ENCODE measurements at regions of chr20 and their contacts with region 1.

Region 1: GRCh38 chr20:49534255-49534712 is 33.7 kb downstream of the PTGIS start:
- DNase-seq: peak; percentile 82
- H3K4me3 Mint-ChIP-seq: no peak overlapping the region
- H3K27ac Mint-ChIP-seq: no peak overlapping the region
- H3K4me1 Mint-ChIP-seq: no peaks in the 10 kb centered on the region
- H3K27me3 Mint-ChIP-seq: peaks cover 66% of the 10 kb centered on the region
- CTCF ChIP-seq: peak; percentile 90

Region 2: DNA sequence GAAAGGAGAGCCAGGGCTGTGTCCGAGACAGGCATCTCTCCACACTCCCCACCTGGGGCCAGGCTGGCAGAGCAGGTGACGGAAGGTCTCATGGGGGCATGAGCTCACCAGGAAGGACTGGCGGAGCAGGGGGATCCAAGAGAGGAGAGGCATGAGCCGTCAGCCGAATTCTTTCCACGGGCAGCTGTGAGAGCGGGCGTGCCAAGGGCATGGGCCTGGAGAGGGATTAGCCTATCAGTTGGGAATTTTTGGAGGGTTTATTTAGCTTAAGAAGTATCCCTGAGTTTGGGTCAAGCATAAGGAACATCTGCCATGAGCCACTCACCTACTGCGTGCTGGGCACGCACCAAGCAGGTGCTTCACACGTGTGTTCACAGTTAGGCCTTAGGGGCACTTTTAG is 196.2 kb before region 1 on chr20:
- CTCF ChIA-PET with region 1: no interaction called
- intact Hi-C with region 1: loop called (anchors 1 kb)
- DNase-seq: no peak
- H3K4me3 Mint-ChIP-seq: no peak overlapping the region
- H3K27ac Mint-ChIP-seq: no peak overlapping the region
- H3K4me1 Mint-ChIP-seq: no peaks in the 10 kb centered on the region
- H3K27me3 Mint-ChIP-seq: peaks cover 62% of the 10 kb centered on the region
- CTCF ChIP-seq: no peak

Region 3: DNA sequence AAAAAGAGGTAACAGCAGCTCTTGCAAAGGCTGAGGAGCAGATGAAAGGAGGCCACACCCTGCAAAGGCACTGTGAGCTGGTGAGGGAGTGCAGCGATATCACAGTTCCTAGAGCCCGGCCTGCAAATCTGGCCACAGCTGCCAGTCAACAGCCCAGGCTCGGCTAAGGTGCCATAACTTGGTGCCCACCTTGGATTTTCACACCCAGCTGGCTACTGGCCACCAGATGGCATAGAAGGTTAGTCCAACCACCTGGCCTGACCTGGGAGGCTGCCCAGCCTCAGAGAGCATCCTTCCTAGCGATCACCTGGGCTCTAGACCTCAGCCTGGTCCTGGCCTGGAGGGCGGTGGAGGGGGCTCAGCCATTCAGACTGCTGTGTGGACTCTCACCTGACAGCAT is 98.6 kb before region 1 on chr20:
- CTCF ChIA-PET with region 1: no interaction called
- intact Hi-C with region 1: loop called (anchors 1 kb)
- DNase-seq: peak; percentile 43
- H3K4me3 Mint-ChIP-seq: no peak overlapping the region
- H3K27ac Mint-ChIP-seq: no peak overlapping the region
- H3K4me1 Mint-ChIP-seq: no peaks in the 10 kb centered on the region
- H3K27me3 Mint-ChIP-seq: peaks cover 100% of the 10 kb centered on the region
- CTCF ChIP-seq: peak; percentile 27

Region 4: GRCh38 chr20:49508435-49509199 is 25.7 kb before region 1 on chr20:
- CTCF ChIA-PET with region 1: no interaction called
- intact Hi-C with region 1: loop called (anchors 1 kb)
- DNase-seq: peak; percentile 32
- H3K4me3 Mint-ChIP-seq: no peak overlapping the region
- H3K27ac Mint-ChIP-seq: no peak overlapping the region
- H3K4me1 Mint-ChIP-seq: no peaks in the 10 kb centered on the region
- H3K27me3 Mint-ChIP-seq: peaks cover 1% of the 10 kb centered on the region
- CTCF ChIP-seq: peak; percentile 75